Activated naive CD4-positive, alpha-beta T cell treated with anti-CD3 and anti-CD28 coated beads for 36 hours (primary cell): ENCODE measurements at regions of chr15 and their contacts with region 1.

Region 1: DNA sequence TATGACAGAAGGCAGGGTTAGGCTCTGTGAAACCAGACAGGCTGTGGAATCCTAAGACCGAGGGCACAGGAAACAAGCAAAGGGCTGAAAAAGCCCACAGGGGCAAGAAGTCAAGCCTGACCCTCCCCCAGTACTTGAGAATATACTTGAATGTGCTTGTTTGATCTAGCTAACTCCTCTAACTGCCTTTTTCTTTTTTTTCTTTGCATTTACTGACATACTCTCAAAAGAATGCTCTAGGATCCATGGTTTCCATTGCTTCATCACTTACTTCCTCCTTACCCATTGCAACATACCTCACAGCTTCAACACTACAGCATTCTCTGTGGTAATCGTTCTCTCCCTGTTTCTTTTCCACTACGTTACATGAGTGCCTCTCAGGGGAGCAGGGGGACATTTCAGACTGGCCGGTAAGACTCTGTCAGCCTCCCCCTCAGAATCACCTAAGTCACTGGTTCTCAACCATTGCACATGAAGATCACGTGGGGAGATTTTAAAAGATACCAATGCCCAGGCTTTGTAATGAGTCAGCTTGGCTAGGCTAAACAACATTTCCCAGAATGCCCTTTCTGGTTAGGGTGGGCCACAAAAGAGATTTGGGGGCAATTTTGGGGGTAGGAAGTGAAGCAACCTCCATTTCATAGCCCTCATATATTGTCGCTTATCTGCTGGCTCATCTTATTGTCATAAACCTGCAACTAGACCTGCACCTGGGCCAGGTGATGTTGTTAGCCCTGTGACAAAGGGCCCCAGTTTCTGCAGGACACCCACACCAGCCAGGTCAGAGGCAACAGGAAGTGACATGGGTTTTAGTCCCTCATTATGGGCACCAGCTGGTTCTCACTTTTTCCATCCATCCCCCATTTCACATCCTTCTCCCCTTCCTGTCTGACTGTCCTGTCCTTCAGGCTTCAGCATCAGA is 24.6 kb upstream of the RSL24D1 start:
- DNase-seq: peak; percentile 49
- H3K4me3 Mint-ChIP-seq: peak overlapping the region; percentile 10
- H3K27ac Mint-ChIP-seq: peak overlapping the region; percentile 87
- H3K4me1 Mint-ChIP-seq: peaks cover 67% of the 10 kb centered on the region
- H3K27me3 Mint-ChIP-seq: no peaks in the 10 kb centered on the region

Region 2: DNA sequence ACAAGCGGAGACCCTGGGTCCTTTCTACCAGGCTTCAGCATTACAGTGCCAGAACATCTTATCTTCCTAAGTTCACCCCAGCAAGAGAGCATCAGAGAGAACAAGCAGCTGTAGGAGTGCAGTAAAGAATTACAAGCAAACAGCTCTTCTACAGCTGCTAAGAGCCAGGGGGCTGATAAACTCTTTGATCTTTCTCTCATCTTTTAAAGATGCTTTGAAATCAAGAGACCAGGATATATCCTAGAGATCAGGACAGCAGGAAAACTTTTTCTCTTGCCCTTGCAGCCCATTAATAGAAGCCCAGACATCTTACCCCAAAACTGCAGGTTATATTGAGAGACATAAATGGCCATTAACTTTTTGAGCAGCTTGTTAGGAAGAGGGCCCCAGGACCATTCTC is 222.7 kb before region 1 on chr15:
- CTCF ChIA-PET with region 1: no interaction called
- intact Hi-C with region 1: no loop called
- DNase-seq: no peak
- H3K4me3 Mint-ChIP-seq: no peak overlapping the region
- H3K27ac Mint-ChIP-seq: no peak overlapping the region
- H3K4me1 Mint-ChIP-seq: no peaks in the 10 kb centered on the region
- H3K27me3 Mint-ChIP-seq: no peaks in the 10 kb centered on the region

Region 3: GRCh38 chr15:55108858-55109518 is 112.4 kb before region 1 on chr15:
- CTCF ChIA-PET with region 1: no interaction called
- intact Hi-C with region 1: no loop called
- DNase-seq: peak; percentile 78
- H3K4me3 Mint-ChIP-seq: no peak overlapping the region
- H3K27ac Mint-ChIP-seq: no peak overlapping the region
- H3K4me1 Mint-ChIP-seq: no peaks in the 10 kb centered on the region
- H3K27me3 Mint-ChIP-seq: no peaks in the 10 kb centered on the region

Region 4: GRCh38 chr15:55196458-55197361 is 24.6 kb before region 1 on chr15 and contains the start of gene RSL24D1:
- CTCF ChIA-PET with region 1: interaction called, 9 read pairs
- intact Hi-C with region 1: loop called (anchors 1 kb)
- DNase-seq: peak; percentile 98
- H3K4me3 Mint-ChIP-seq: no peak within 1 kb of the TSS
- H3K27ac Mint-ChIP-seq: no peak within 1 kb of the TSS
- H3K4me1 Mint-ChIP-seq: peaks cover 16% of the 10 kb centered on the region
- H3K27me3 Mint-ChIP-seq: no peaks in the 10 kb centered on the region
- total RNA-seq, gene RSL24D1: 201 to 209 TPM

Region 5: GRCh38 chr15:55241891-55242290 is 20.5 kb after region 1 on chr15:
- CTCF ChIA-PET with region 1: interaction called, 3 read pairs
- intact Hi-C with region 1: loop called (anchors 1 kb)
- DNase-seq: no peak
- H3K4me3 Mint-ChIP-seq: no peak overlapping the region
- H3K27ac Mint-ChIP-seq: peak overlapping the region; percentile 79
- H3K4me1 Mint-ChIP-seq: peaks cover 75% of the 10 kb centered on the region
- H3K27me3 Mint-ChIP-seq: no peaks in the 10 kb centered on the region

Region 6: DNA sequence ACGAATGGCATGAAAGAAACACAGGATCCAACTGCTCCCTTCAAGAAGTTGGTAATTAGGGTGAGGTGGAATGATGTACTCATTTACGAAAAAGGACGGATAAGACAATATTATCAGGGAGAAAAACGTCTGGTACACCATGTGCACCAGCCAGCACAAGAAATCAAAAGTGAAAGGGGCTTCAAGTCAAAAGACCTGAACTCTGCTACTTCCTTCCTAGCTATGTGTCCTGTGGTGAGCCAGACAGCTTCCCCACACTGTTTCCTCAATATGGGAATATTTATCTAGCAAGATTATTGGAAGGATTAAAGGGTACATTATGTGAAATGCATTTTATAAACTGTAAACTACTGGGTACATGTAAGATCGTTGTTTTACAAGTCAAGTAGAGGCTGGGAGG is 34.4 kb after region 1 on chr15:
- CTCF ChIA-PET with region 1: interaction called, 3 read pairs
- intact Hi-C with region 1: loop called (anchors 1 kb)
- DNase-seq: no peak
- H3K4me3 Mint-ChIP-seq: peak overlapping the region; percentile 61
- H3K27ac Mint-ChIP-seq: peak overlapping the region; percentile 82
- H3K4me1 Mint-ChIP-seq: peaks cover 73% of the 10 kb centered on the region
- H3K27me3 Mint-ChIP-seq: no peaks in the 10 kb centered on the region

Region 7: DNA sequence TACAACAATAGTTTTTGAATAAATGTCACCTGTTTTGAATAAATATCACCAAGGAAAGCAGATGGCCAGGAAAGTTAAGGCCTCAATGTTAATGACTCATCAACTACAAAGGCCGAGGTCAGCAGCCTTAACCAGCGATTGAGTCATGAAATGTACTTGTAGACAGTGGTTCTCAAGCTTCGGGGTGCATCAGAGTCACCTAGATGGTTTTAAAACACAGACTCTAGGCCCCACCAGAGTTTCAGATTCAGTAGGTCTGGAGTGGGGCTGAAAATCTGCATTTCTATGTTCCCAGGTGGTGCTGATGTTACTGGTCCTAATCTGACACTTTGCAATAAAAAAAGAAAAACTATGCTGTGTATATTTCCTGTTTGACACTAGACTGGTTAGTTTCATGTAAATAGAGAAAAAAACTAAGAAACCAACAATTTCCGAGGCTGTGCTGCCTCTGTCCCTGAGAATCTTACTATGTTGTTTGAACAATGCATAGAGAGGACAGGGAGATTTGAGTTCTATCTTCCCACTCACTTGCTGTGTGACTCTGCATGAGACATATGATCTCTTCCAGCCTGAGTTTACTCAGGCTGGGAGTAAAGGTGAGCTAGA is 58.5 kb after region 1 on chr15:
- CTCF ChIA-PET with region 1: interaction called, 5 read pairs
- intact Hi-C with region 1: loop called (anchors 1 kb)
- DNase-seq: peak; percentile 72
- H3K4me3 Mint-ChIP-seq: peak overlapping the region; percentile 31
- H3K27ac Mint-ChIP-seq: peak overlapping the region; percentile 90
- H3K4me1 Mint-ChIP-seq: peaks cover 95% of the 10 kb centered on the region
- H3K27me3 Mint-ChIP-seq: no peaks in the 10 kb centered on the region

Region 8: GRCh38 chr15:55381595-55381994 is 160.2 kb after region 1 on chr15:
- CTCF ChIA-PET with region 1: no interaction called
- intact Hi-C with region 1: no loop called
- DNase-seq: no peak
- H3K4me3 Mint-ChIP-seq: no peak overlapping the region
- H3K27ac Mint-ChIP-seq: no peak overlapping the region
- H3K4me1 Mint-ChIP-seq: no peaks in the 10 kb centered on the region
- H3K27me3 Mint-ChIP-seq: no peaks in the 10 kb centered on the region

Region 9: GRCh38 chr15:55420171-55420866 is 199.0 kb after region 1 on chr15:
- CTCF ChIA-PET with region 1: no interaction called
- intact Hi-C with region 1: no loop called
- DNase-seq: no peak
- H3K4me3 Mint-ChIP-seq: no peak overlapping the region
- H3K27ac Mint-ChIP-seq: no peak overlapping the region
- H3K4me1 Mint-ChIP-seq: no peaks in the 10 kb centered on the region
- H3K27me3 Mint-ChIP-seq: no peaks in the 10 kb centered on the region

Region 10: DNA sequence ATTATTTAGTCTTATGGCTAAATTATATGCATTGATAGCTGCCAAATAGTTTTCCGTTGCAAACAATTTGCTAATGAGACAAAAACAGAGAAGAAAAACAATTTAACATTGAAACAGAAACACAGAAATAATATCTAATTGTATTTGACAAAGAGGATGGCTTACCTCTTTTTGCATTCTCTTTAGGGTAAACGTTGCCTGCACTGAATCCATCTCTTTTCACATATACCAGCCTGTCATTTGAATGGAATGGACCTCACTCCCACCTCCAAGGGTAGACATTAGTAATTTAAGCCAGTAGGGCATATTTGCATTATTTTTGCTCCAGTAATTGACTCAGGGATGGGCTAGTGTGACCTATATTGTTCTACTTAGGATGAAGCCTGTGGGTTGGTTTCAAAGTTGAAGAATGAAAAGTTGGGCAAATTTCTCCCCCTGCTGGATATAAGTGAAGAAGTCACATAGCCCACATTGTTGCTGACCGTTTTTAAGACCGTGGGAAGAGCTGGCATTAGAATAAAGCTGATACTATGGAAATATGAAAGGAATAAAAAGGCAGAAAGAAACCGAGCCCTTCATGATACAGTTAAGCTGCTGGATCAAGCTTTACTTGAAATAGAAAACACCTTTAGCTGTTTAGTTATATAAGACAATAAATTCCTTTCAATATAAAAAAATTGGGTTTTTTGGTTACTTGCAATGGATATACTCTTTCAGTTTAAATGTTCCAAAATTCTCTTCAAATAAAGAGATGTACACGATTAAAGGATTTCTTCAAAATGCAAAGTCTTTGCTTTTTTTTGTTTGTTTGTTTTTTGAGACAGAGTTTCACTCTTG is 213.9 kb after region 1 on chr15:
- CTCF ChIA-PET with region 1: interaction called, 9 read pairs
- intact Hi-C with region 1: loop called (anchors 1 kb)
- DNase-seq: peak; percentile 14
- H3K4me3 Mint-ChIP-seq: no peak overlapping the region
- H3K27ac Mint-ChIP-seq: no peak overlapping the region
- H3K4me1 Mint-ChIP-seq: no peaks in the 10 kb centered on the region
- H3K27me3 Mint-ChIP-seq: no peaks in the 10 kb centered on the region